ENCODE measurements at regions of chr17 and their contacts with region 1.

Region 1: GRCh38 chr17:68184816-68185436 is 62.9 kb upstream of the AMZ2 start:
- DNase-seq: peak; percentile 69 to 84 (median 75)
- H3K4me3 ChIP-seq: peak overlapping the region; percentile 1 to 54
- H3K4me3 Mint-ChIP-seq: peak overlapping the region; percentile 78 to 100 (median 94)
- H3K27ac ChIP-seq: peak overlapping the region; percentile 80
- H3K27ac Mint-ChIP-seq: peak overlapping the region; percentile 90 to 96 (median 95)
- H3K4me1 ChIP-seq: peaks cover 73% of the 10 kb centered on the region
- H3K4me1 Mint-ChIP-seq: peaks cover 46 to 89% (median 65%) of the 10 kb centered on the region in 4 donors
- H3K27me3 ChIP-seq: no peaks in the 10 kb centered on the region
- H3K27me3 Mint-ChIP-seq: no peaks in the 10 kb centered on the region

Region 2: DNA sequence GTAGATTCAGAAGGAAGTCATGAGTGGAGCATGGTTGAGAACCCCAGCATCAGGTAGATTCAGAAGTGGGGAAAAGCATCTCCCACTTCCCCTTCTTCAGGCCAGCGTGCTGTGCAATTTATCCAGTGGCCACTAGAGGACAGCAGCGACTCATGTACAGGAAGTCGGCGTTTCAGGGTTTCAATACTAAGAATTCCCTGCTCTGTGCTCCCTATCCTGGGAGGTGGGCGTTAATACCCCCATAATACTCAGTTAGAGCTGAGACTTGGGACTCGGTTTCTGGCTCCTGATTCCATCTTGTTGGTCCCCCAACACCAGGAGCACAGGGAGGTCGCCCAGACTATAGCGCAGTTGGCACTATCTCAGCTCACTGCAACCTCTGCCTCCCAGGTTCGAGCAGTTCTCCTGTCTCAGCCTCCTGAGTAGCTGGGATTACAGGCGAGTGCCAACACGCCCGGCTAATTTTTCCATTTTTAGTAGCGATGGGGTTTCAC is 12.4 kb before region 1 on chr17:
- CTCF ChIA-PET with region 1: interaction called, 62 read pairs
- POLR2A ChIA-PET with region 1: interaction called, 12 read pairs
- intact Hi-C with region 1: no loop called
- DNase-seq: peak; percentile 67 to 78 (median 68)
- H3K4me3 ChIP-seq: no peak overlapping the region
- H3K4me3 Mint-ChIP-seq: no peak overlapping the region
- H3K27ac ChIP-seq: no peak overlapping the region
- H3K27ac Mint-ChIP-seq: no peak overlapping the region
- H3K4me1 ChIP-seq: peaks cover 3% of the 10 kb centered on the region
- H3K4me1 Mint-ChIP-seq: peaks cover 8 to 17% (median 10%) of the 10 kb centered on the region in 4 donors
- H3K27me3 ChIP-seq: no peaks in the 10 kb centered on the region
- H3K27me3 Mint-ChIP-seq: no peaks in the 10 kb centered on the region

Region 3: GRCh38 chr17:68238164-68238872 is 53.4 kb after region 1 on chr17:
- CTCF ChIA-PET with region 1: interaction called, 5 read pairs
- POLR2A ChIA-PET with region 1: interaction called, 14 read pairs
- intact Hi-C with region 1: no loop called
- DNase-seq: peak; percentile 53 to 84 (median 63)
- H3K4me3 ChIP-seq: peak overlapping the region; percentile 45 to 61
- H3K4me3 Mint-ChIP-seq: peak overlapping the region; percentile 80 to 92 (median 86)
- H3K27ac ChIP-seq: peak overlapping the region; percentile 93
- H3K27ac Mint-ChIP-seq: peak overlapping the region; percentile 92 to 100 (median 97)
- H3K4me1 ChIP-seq: peaks cover 58% of the 10 kb centered on the region
- H3K4me1 Mint-ChIP-seq: peaks cover 47 to 67% (median 54%) of the 10 kb centered on the region in 4 donors
- H3K27me3 ChIP-seq: no peaks in the 10 kb centered on the region
- H3K27me3 Mint-ChIP-seq: no peaks in the 10 kb centered on the region

Region 4: DNA sequence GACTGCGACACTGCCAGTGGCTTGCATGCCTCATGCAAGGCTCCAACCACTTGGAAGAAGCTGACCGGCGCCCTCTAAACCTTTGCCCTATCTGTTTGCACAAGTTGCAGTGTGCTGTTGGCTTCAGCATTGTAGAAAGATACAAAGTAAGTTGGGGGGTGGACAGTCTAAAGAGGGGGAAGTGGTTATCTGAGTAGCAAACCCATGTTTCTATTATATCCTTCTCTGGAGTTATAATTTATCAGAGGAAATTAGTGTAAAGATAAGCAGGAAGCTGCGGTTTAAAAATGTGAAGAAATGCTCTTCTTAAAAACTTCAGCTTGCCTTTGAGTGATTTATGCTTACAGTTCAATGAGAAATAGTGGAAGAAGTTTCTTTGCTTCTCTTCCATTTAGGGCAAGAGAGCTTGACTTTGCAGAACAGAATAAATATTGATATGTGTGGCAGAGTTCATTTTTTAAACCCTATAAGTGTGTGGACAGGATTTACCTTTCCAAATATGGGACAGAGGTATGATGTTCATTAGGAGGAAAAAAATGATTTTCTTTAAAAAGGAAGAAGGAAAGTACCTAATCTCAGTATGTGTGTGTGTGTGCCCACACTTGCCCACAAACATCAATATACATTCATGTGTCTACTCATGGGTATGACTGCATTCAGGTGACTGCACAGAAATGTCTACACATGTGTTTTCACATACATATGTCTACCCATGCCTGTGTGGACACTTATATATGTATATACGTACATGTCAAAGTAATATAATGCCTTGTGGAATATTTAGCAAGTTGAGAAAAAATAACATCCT is 71.0 kb after region 1 on chr17:
- CTCF ChIA-PET with region 1: interaction called, 9 read pairs
- POLR2A ChIA-PET with region 1: interaction called, 22 read pairs
- intact Hi-C with region 1: no loop called
- DNase-seq: peak; percentile 50 to 73 (median 60)
- H3K4me3 ChIP-seq: no peak overlapping the region
- H3K4me3 Mint-ChIP-seq: peak overlapping the region; percentile 46 to 73 (median 66)
- H3K27ac ChIP-seq: peak overlapping the region; percentile 88
- H3K27ac Mint-ChIP-seq: peak overlapping the region; percentile 81 to 99 (median 98)
- H3K4me1 ChIP-seq: peaks cover 86% of the 10 kb centered on the region
- H3K4me1 Mint-ChIP-seq: peaks cover 61 to 85% (median 72%) of the 10 kb centered on the region in 4 donors
- H3K27me3 ChIP-seq: no peaks in the 10 kb centered on the region
- H3K27me3 Mint-ChIP-seq: no peaks in the 10 kb centered on the region

Region 5: DNA sequence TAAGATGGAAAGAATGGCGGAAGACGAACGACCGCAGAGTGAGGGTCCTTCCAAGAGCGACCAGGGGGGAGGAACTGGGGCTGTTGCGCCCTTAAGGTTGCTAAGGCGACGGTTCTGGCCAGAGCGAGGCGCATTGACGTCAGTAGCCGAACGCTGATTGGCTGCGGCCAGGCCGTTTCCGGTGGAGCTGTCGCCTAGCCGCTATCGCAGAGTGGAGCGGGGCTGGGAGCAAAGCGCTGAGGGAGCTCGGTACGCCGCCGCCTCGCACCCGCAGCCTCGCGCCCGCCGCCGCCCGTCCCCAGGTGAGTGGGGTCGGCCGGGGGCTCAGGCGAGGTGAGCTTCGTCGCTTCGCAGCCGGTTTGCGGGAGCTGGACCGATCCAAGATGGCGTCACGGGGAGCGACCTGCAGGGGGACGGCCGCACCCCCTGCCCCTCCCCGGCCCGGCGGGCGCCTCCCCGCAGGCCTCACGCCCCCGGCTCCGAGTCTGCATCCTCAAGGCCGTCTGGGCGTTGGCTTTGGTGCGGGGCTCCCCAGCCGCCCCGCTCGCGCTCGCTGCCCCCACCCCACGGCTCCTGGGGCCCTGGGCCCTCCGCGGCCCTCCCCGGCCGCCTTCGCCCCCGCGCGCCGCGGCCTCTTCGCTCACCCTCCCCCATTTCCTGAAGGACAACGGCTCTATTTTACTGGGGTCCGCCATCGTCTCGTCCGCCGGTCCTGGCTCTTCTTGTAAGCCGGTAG is 327.5 kb after region 1 on chr17 and contains the start of gene PRKAR1A:
- CTCF ChIA-PET with region 1: no interaction called
- POLR2A ChIA-PET with region 1: interaction called, 3 read pairs
- intact Hi-C with region 1: loop called (anchors 5 kb)
- DNase-seq: peak; percentile 93 to 97 (median 96)
- H3K4me3 ChIP-seq: peak within 1 kb of the TSS; percentile 95 to 96
- H3K4me3 Mint-ChIP-seq: peak within 1 kb of the TSS; percentile 97 to 100 (median 99)
- H3K27ac ChIP-seq: peak within 1 kb of the TSS; percentile 96
- H3K27ac Mint-ChIP-seq: peak within 1 kb of the TSS; percentile 96 to 100 (median 100)
- H3K4me1 ChIP-seq: peaks cover 30% of the 10 kb centered on the region
- H3K4me1 Mint-ChIP-seq: peaks cover 36 to 70% (median 43%) of the 10 kb centered on the region in 4 donors
- H3K27me3 ChIP-seq: no peaks in the 10 kb centered on the region
- H3K27me3 Mint-ChIP-seq: no peaks in the 10 kb centered on the region
- total RNA-seq, gene PRKAR1A: 182 to 183 TPM